Transverse colon (tissue), 4 donors: ENCODE measurements at regions of chr6 and their contacts with region 1.

Region 1: GRCh38 chr6:1596088-1596852 is 13.4 kb upstream of the FOXC1 start:
- DNase-seq: peak; percentile 55
- H3K4me3 ChIP-seq: no peak overlapping the region
- H3K27ac ChIP-seq: no peak overlapping the region
- H3K4me1 ChIP-seq: peaks cover 0 to 12% (median 7%) of the 10 kb centered on the region in 4 donors
- H3K27me3 ChIP-seq: peaks cover 82% of the 10 kb centered on the region
- CTCF ChIP-seq: peak; percentile 88 to 95 (median 93)
- EP300 ChIP-seq: no peak
- POLR2A ChIP-seq: no peak

Region 2: DNA sequence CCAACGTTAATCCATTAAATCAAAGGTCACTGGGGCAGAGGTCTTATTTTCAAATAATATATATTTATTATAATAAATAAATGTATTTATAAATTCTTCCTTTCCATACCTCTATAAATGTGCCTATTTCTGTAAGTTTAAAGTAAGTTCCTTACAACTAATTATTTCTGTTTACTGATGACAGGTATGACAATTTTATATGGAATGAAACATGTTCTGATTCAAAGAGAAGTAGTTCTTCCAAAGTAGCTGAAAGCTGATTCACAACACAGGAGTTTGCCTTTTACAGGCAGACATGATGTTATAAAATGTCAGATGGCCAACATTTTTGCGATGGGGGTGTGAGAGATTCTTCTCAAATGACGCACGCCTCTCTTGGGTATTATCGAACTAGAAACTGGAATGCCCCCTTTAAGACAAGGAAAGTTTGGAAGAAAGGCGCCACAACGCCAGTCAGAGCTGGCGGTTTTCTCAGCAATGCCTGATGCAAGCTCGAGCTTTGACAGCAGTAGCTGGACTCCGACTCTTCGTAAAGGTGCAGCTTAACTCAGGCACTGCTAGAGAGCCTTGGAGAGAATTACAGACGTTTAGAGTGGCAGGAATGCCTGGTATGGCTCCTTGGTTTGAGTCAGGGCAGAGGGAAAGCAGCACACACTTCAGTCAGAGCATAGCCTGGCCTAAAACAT is 105.5 kb after region 1 on chr6:
- in situ Hi-C with region 1: no loop called
- intact Hi-C with region 1: no loop called
- DNase-seq: no peak
- H3K4me3 ChIP-seq: no peak overlapping the region
- H3K27ac ChIP-seq: peak overlapping the region in 1 of 4 donors; percentile 35
- H3K4me1 ChIP-seq: no peaks in the 10 kb centered on the region
- H3K27me3 ChIP-seq: no peaks in the 10 kb centered on the region
- CTCF ChIP-seq: no peak
- EP300 ChIP-seq: no peak
- POLR2A ChIP-seq: no peak

Region 3: GRCh38 chr6:2190661-2191389 is 594.6 kb after region 1 on chr6:
- in situ Hi-C with region 1: loop called in 1 of 4 experiments (anchors 10 kb)
- intact Hi-C with region 1: loop called (anchors 5 kb)
- DNase-seq: no peak
- H3K4me3 ChIP-seq: no peak overlapping the region
- H3K27ac ChIP-seq: no peak overlapping the region
- H3K4me1 ChIP-seq: peaks cover 0 to under 1% (median 0%) of the 10 kb centered on the region in 4 donors
- H3K27me3 ChIP-seq: no peaks in the 10 kb centered on the region
- CTCF ChIP-seq: no peak
- EP300 ChIP-seq: no peak
- POLR2A ChIP-seq: no peak

Region 4: GRCh38 chr6:2296781-2297180 is 700.5 kb after region 1 on chr6:
- in situ Hi-C with region 1: no loop called
- intact Hi-C with region 1: no loop called
- DNase-seq: no peak
- H3K4me3 ChIP-seq: no peak overlapping the region
- H3K27ac ChIP-seq: no peak overlapping the region
- H3K4me1 ChIP-seq: no peaks in the 10 kb centered on the region
- H3K27me3 ChIP-seq: no peaks in the 10 kb centered on the region
- CTCF ChIP-seq: no peak
- EP300 ChIP-seq: no peak
- POLR2A ChIP-seq: no peak

Region 5: GRCh38 chr6:2353412-2354137 is 757.3 kb after region 1 on chr6:
- in situ Hi-C with region 1: loop called in 3 of 4 experiments (anchors 10 kb)
- intact Hi-C with region 1: loop called (anchors 5 kb)
- DNase-seq: peak; percentile 78
- H3K4me3 ChIP-seq: no peak overlapping the region
- H3K27ac ChIP-seq: no peak overlapping the region
- H3K4me1 ChIP-seq: peaks cover 0 to 8% (median 0%) of the 10 kb centered on the region in 4 donors
- H3K27me3 ChIP-seq: no peaks in the 10 kb centered on the region
- CTCF ChIP-seq: peak; percentile 71 to 83 (median 81)
- EP300 ChIP-seq: no peak
- POLR2A ChIP-seq: no peak

Region 6: DNA sequence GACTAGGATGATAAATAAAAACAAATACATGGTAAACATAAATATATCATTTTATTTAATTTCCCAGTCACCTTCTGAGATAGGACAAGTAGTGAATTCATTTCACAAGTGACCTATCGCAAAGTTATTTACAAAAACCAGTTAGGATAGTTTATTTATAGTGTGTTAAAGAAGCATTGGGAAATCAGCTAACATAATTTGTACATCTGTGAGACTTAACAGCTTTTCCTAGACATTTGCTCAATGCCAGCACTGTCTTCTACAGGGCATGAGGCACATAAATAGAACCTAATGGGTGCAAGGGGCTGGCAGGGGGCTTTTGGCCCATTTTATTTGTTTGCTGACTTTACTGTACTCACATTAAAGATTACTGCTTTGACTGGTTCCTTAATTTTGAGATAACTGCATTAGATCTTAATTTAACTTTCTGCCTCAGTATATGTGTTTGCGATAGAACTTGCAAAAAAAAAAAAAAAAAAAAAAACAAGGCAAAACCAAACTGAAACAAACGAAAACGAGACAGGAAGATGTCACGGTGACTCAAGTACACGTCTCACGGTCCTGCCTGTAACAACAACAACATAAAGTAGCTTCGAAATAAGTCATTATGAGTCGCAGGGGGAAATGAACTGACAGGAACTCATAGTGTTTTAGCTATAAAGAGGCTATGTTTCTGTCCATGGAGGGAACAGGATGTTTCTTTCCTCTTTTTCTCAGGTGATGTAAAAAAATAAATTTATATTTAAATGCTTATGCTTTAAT is 782.8 kb after region 1 on chr6:
- in situ Hi-C with region 1: no loop called
- intact Hi-C with region 1: no loop called
- DNase-seq: no peak
- H3K4me3 ChIP-seq: no peak overlapping the region
- H3K27ac ChIP-seq: no peak overlapping the region
- H3K4me1 ChIP-seq: peaks cover 0 to 11% (median 2%) of the 10 kb centered on the region in 4 donors
- H3K27me3 ChIP-seq: no peaks in the 10 kb centered on the region
- CTCF ChIP-seq: no peak
- EP300 ChIP-seq: no peak
- POLR2A ChIP-seq: no peak

Region 7: DNA sequence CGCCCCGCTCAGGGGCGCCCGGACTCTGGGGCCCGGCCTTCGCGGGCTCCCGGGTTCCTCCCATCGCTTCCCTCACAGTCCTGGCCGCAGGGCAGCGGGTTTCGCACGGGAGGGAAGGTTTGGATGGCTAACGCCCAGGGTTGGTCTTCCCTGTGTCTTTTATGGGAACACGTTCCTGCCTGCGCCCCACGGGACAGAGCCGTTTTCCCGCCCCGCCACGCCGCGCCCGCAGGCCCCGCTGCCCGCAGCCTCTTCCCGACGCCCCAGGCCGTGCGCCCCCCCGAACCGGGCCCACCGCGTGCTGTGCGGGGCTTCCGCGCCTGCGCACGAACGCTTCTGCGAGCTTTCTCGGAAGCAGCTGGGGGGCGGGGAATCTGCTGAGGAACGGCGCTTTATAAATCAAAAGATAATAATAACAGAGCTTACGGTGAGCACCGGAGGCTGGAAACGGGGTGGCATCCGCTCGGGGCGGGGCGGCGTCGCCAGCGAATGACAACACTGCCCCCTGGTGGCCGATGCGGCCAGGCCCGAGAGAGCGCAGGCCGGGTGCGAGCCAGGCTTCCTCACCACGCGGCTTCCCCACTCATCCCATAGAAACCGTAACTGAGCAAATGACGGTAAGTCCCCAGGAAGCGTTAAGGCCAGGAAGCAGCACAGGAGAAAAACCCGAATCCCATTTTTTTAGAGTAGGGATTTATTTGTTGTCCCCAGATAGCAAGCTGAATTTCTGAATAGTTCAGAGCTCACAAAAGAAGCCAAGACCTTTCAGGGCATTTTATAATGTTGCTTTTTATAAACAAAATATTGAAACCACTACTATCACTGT is 1038.1 kb after region 1 on chr6:
- in situ Hi-C with region 1: loop called (anchors 10 to 25 kb)
- intact Hi-C with region 1: loop called (anchors 5 kb)
- DNase-seq: peak; percentile 82
- H3K4me3 ChIP-seq: peak overlapping the region; percentile 20 to 52 (median 32)
- H3K27ac ChIP-seq: peak overlapping the region; percentile 6 to 40 (median 25)
- H3K4me1 ChIP-seq: peaks cover 0 to 13% (median 7%) of the 10 kb centered on the region in 4 donors
- H3K27me3 ChIP-seq: no peaks in the 10 kb centered on the region
- CTCF ChIP-seq: peak; percentile 95 to 99 (median 97)
- EP300 ChIP-seq: no peak
- POLR2A ChIP-seq: no peak

Region 8: GRCh38 chr6:2749969-2750600 is 1153.8 kb after region 1 on chr6:
- in situ Hi-C with region 1: loop called in 1 of 4 experiments (anchors 25 kb)
- intact Hi-C with region 1: loop called (anchors 10 kb)
- DNase-seq: peak; percentile 70
- H3K4me3 ChIP-seq: no peak overlapping the region
- H3K27ac ChIP-seq: no peak overlapping the region
- H3K4me1 ChIP-seq: peaks cover 0 to 8% (median 0%) of the 10 kb centered on the region in 4 donors
- H3K27me3 ChIP-seq: no peaks in the 10 kb centered on the region
- CTCF ChIP-seq: peak; percentile 67 to 88 (median 87)
- EP300 ChIP-seq: no peak
- POLR2A ChIP-seq: no peak